Transverse colon (tissue), 4 donors: ENCODE measurements at regions of chr10 and their contacts with region 1.

Region 1: GRCh38 chr10:103895411-103896186 is 22.4 kb downstream of the STN1 start:
- DNase-seq: no peak
- H3K4me3 ChIP-seq: no peak overlapping the region
- H3K27ac ChIP-seq: peak overlapping the region; percentile 79 to 87 (median 82)
- H3K4me1 ChIP-seq: peaks cover 14 to 37% (median 29%) of the 10 kb centered on the region in 4 donors
- H3K27me3 ChIP-seq: no peaks in the 10 kb centered on the region
- CTCF ChIP-seq: no peak
- EP300 ChIP-seq: no peak
- POLR2A ChIP-seq: no peak

Region 2: GRCh38 chr10:103983367-103983911 is 87.8 kb after region 1 on chr10:
- in situ Hi-C with region 1: loop called in 1 of 4 experiments (anchors 10 kb)
- intact Hi-C with region 1: no loop called
- DNase-seq: no peak
- H3K4me3 ChIP-seq: no peak overlapping the region
- H3K27ac ChIP-seq: peak overlapping the region in 2 of 4 donors; percentile 13 to 15
- H3K4me1 ChIP-seq: peaks cover 0 to 72% (median 14%) of the 10 kb centered on the region in 4 donors
- H3K27me3 ChIP-seq: no peaks in the 10 kb centered on the region
- CTCF ChIP-seq: no peak
- EP300 ChIP-seq: no peak
- POLR2A ChIP-seq: no peak